Endothelial cell of umbilical vein (primary cell): ENCODE measurements at regions of chr10 and their contacts with region 1.

Region 1: GRCh38 chr10:114876602-114877300 is 55.2 kb downstream of the FHIP2A start:
- DNase-seq: peak; percentile 58
- H3K4me3 ChIP-seq: no peak overlapping the region
- H3K27ac ChIP-seq: no peak overlapping the region
- H3K4me1 ChIP-seq: no peaks in the 10 kb centered on the region
- H3K27me3 ChIP-seq: no peaks in the 10 kb centered on the region
- CTCF ChIP-seq: peak; percentile 81 to 89
- POLR2A ChIP-seq: no peak

Region 2: DNA sequence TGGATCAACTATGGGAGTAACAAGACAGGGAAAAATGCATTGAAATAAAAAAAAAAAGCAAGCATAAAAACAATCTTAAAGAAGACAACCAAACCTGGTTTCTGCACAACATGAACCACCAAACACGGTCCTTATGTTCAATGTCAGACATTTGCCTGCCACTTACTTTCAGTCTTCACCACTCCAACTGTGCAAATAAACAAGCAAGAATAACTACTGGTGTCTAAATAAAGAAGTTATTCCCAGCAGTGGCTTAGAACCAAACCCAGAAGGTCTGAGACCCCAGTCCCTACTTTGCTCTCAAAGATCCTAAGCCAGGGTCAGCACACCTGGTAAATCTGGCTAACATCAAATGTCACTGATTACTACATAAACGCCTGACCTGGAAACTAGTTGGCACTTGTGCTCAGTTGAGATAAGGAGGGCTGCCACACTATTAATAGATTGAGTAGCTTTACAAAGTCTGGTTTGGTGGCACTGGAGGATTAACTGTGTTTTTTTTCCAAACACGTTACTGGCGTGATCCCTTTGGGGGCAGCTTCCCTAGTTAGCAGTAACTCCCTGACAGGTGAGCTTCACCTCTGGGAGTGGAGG is 156.0 kb before region 1 on chr10:
- CTCF ChIA-PET with region 1: no interaction called
- POLR2A ChIA-PET with region 1: no interaction called
- dilution Hi-C with region 1: no loop called
- intact Hi-C with region 1: no loop called
- DNase-seq: peak; percentile 69
- H3K4me3 ChIP-seq: no peak overlapping the region
- H3K27ac ChIP-seq: no peak overlapping the region
- H3K4me1 ChIP-seq: peaks cover 10% of the 10 kb centered on the region
- H3K27me3 ChIP-seq: no peaks in the 10 kb centered on the region
- CTCF ChIP-seq: no peak
- POLR2A ChIP-seq: no peak

Region 3: DNA sequence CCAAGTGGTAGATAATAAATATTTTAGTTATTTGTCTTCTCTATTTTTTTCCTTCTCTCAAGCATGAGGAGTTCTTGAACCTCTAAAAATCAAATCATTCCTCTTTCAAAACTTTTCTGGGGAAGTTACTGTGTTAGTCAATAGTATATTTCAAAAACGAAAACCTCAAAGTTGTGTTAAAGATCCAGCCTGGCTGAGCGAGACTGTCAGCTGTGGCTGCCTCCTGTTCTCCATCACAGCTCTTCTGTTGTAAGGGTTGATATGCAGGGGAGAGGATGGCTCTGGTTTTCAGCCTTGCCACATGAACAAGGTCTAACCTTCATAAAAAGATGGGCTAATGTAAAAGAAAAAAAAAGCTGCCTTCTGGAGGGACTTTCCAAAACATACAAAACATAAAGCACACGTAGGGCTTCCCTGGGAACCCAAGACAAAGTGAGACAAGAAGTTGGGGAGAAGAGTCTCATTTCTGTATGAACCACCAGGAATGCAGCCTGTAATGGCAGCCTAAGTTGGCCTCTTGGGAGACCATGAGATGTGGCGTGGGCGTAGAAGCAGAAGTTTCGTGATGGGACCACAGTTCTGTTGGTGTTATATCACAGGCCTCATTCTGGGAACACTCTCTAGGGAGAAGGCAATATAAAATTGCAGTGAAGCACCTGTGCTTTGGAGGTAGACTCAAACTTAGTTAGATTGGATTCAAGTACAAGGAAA is 133.1 kb before region 1 on chr10:
- CTCF ChIA-PET with region 1: no interaction called
- POLR2A ChIA-PET with region 1: no interaction called
- dilution Hi-C with region 1: no loop called
- intact Hi-C with region 1: no loop called
- DNase-seq: no peak
- H3K4me3 ChIP-seq: no peak overlapping the region
- H3K27ac ChIP-seq: no peak overlapping the region
- H3K4me1 ChIP-seq: no peaks in the 10 kb centered on the region
- H3K27me3 ChIP-seq: no peaks in the 10 kb centered on the region
- CTCF ChIP-seq: no peak
- POLR2A ChIP-seq: no peak

Region 4: DNA sequence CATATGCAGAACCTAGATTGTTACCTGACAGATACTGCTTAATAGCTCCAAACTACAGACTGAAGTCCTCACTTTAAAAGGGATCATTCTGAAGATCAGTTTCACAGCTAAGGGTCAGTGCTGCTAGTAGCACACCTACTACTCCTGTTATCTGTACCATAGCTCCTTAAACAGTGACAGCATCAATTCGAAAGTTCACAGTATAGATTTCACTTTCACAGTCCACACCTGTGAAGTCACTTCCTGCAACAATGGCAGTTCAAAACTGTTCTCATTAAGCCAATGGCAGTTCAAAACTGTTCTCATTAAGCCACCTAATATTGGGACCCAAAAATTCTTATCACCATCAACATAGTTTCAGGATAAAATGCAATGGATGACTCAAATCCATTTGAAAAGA is 65.8 kb before region 1 on chr10:
- CTCF ChIA-PET with region 1: no interaction called
- POLR2A ChIA-PET with region 1: no interaction called
- dilution Hi-C with region 1: no loop called
- intact Hi-C with region 1: no loop called
- DNase-seq: no peak
- H3K4me3 ChIP-seq: no peak overlapping the region
- H3K27ac ChIP-seq: no peak overlapping the region
- H3K4me1 ChIP-seq: no peaks in the 10 kb centered on the region
- H3K27me3 ChIP-seq: no peaks in the 10 kb centered on the region
- CTCF ChIP-seq: no peak
- POLR2A ChIP-seq: no peak

Region 5: GRCh38 chr10:114821293-114821914 is 55.3 kb before region 1 on chr10 and contains the start of gene FHIP2A:
- CTCF ChIA-PET with region 1: interaction called, 14 read pairs
- POLR2A ChIA-PET with region 1: no interaction called
- dilution Hi-C with region 1: no loop called
- intact Hi-C with region 1: no loop called
- DNase-seq: peak; percentile 74
- H3K4me3 ChIP-seq: peak within 1 kb of the TSS; percentile 78 to 96 (median 86)
- H3K27ac ChIP-seq: peak within 1 kb of the TSS; percentile 97
- H3K4me1 ChIP-seq: peaks cover 35% of the 10 kb centered on the region
- H3K27me3 ChIP-seq: no peaks in the 10 kb centered on the region
- CTCF ChIP-seq: peak; percentile 53 to 60
- POLR2A ChIP-seq: peak; percentile 61
- total RNA-seq, gene FHIP2A: 34.8 and 39.6 TPM in 2 replicates

Region 6: DNA sequence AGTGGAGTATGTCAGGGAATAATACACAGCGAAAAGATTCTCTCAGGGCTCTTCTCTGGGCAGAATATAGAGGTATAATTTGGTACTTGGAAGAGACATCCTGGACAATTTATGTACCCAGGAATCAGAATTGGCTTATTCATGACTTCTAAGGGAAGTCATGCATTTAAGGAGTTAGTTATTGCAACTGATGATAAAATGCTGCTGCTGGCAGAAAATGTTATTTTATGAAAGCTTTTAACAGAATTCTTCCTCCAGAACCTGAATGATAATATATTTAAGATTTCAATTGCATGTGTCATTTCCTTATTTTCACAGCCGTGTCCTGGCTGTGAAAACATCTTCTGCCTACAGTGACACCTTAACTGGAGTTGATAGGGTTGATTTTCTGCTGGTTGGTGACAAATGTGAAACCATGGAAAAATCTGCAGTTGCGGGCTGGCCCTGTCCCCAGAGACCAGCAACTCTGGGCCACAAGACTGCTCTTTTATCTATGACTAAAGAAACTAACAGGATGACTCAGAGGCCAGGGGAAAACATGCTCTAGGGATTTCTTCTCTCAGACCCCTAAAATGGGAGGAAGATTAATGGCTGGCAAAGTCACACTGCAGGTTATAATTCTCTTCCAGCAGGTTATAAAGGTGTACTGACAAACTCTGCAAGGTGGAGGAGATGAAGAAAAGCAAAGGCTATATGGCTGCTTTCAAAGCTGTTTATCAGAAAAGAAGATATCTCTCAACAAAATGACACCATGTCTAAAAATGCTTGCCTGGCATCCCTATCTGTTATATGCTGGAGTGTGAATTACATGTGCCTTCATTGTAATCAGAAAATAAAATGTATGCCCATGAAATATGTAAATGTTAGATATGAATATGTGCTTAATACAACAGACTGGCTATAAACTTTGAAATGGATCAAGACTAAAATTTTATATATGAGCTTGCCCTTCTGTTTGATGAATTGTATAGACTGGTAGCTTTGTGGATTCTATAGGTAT is 49.1 kb after region 1 on chr10:
- CTCF ChIA-PET with region 1: interaction called, 15 read pairs
- POLR2A ChIA-PET with region 1: no interaction called
- dilution Hi-C with region 1: no loop called
- intact Hi-C with region 1: no loop called
- DNase-seq: peak; percentile 77
- H3K4me3 ChIP-seq: peak overlapping the region in 1 of 3 experiments; percentile 15
- H3K27ac ChIP-seq: peak overlapping the region; percentile 60
- H3K4me1 ChIP-seq: peaks cover 16% of the 10 kb centered on the region
- H3K27me3 ChIP-seq: no peaks in the 10 kb centered on the region
- CTCF ChIP-seq: no peak
- POLR2A ChIP-seq: no peak

Region 7: DNA sequence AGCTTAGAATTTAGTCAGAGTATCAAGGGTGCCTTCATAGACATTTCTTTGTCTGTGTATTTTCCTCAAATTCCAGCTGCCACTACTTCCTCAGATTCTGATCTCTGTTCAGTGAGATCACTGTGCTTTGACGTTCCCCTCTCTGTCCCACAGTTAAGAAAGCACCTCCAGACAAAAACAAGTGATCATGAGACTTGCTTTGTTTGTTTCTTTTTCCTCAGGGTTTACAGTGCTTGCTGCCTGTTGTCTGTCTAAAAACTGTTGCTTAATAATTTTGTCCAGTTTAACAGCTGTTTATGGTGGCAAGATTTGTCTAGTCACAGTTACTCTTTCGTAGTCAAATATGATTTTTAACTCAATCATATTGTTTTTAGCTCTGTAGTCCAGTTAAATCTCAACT is 90.3 kb after region 1 on chr10:
- CTCF ChIA-PET with region 1: interaction called, 11 read pairs
- POLR2A ChIA-PET with region 1: no interaction called
- dilution Hi-C with region 1: no loop called
- intact Hi-C with region 1: no loop called
- DNase-seq: peak; percentile 86
- H3K4me3 ChIP-seq: no peak overlapping the region
- H3K27ac ChIP-seq: peak overlapping the region; percentile 15
- H3K4me1 ChIP-seq: no peaks in the 10 kb centered on the region
- H3K27me3 ChIP-seq: no peaks in the 10 kb centered on the region
- CTCF ChIP-seq: no peak
- POLR2A ChIP-seq: no peak

Region 8: GRCh38 chr10:115129752-115130151 is 253.0 kb after region 1 on chr10:
- CTCF ChIA-PET with region 1: interaction called, 99 read pairs
- POLR2A ChIA-PET with region 1: no interaction called
- dilution Hi-C with region 1: no loop called
- intact Hi-C with region 1: loop called (anchors 1 kb)
- DNase-seq: peak; percentile 46
- H3K4me3 ChIP-seq: no peak overlapping the region
- H3K27ac ChIP-seq: no peak overlapping the region
- H3K4me1 ChIP-seq: no peaks in the 10 kb centered on the region
- H3K27me3 ChIP-seq: no peaks in the 10 kb centered on the region
- CTCF ChIP-seq: no peak
- POLR2A ChIP-seq: no peak